AG04450 (cell line): ENCODE measurements at regions of chr4 and their contacts with region 1.

Region 1: DNA sequence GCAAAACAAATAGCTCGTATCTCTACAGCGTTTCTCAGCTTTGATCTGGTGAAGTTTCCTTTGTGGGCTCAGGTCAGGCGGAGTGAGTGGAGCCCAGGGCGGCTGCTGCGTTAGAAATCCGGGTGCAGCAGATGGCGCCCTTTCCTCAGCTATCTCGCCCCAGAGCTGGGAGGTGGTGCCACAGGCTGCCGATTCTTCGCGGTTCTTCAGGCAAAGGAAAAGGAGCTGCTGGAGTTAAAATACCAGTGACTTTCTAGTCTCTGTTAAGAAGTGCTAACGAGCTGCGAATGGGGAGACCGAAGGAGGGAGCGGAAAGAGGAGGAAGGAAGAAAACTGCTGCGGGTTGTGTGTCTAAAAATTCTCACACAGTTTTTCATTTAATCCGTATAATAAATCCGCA is 114.6 kb downstream of the CPE start:
- DNase-seq: no peak
- H3K4me3 ChIP-seq: no peak overlapping the region
- H3K27ac ChIP-seq: no peak overlapping the region
- H3K27me3 ChIP-seq: no peaks in the 10 kb centered on the region
- CTCF ChIP-seq: peak; percentile 75

Region 2: DNA sequence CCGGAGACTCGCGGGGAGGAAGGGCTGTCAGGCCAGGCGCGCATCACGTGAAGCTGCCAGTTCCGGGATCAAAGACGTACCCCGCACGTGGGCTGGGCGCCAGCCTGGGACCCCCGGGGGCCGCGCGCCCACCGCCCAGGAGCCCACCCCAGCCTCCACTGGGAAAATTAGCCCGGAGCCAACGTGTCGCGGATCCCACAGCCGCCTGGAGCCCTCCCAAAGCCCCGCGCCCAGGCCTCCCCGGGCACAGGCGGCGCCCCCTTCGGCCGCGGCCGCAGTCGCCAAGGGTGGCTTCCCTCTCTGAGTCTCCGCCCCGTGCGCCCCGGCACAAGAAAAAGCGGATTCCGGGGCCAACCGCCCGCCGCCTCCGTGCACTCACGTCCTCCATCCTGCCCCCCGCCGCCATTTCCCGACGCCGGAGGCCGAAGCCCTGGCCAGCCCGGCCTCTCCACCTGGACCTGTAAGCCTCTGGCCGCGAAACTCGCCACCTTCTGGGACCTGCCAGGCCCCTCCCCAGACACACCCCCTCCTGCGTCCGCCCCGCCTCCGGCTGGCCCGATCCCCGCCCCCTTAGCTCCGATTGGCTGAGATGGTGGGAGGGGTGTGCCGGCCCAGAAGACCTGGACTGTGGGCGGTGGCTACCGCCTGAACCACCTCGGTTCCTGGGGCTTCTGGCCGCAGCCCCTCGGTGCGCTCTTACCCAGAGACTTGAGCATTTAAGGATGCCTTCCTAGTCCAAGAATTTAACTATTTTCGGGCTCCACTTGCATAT is 380.8 kb before region 1 on chr4 and contains the start of gene TMEM192:
- CTCF ChIA-PET with region 1: interaction called, 10 read pairs
- POLR2A ChIA-PET with region 1: no interaction called
- DNase-seq: peak; percentile 53
- H3K4me3 ChIP-seq: peak within 1 kb of the TSS; percentile 85
- H3K27ac ChIP-seq: peak within 1 kb of the TSS; percentile 63
- H3K27me3 ChIP-seq: no peaks in the 10 kb centered on the region
- CTCF ChIP-seq: peak; percentile 45
- polyA plus RNA-seq, gene TMEM192: 15.3 and 15.8 TPM in 2 replicates

Region 3: DNA sequence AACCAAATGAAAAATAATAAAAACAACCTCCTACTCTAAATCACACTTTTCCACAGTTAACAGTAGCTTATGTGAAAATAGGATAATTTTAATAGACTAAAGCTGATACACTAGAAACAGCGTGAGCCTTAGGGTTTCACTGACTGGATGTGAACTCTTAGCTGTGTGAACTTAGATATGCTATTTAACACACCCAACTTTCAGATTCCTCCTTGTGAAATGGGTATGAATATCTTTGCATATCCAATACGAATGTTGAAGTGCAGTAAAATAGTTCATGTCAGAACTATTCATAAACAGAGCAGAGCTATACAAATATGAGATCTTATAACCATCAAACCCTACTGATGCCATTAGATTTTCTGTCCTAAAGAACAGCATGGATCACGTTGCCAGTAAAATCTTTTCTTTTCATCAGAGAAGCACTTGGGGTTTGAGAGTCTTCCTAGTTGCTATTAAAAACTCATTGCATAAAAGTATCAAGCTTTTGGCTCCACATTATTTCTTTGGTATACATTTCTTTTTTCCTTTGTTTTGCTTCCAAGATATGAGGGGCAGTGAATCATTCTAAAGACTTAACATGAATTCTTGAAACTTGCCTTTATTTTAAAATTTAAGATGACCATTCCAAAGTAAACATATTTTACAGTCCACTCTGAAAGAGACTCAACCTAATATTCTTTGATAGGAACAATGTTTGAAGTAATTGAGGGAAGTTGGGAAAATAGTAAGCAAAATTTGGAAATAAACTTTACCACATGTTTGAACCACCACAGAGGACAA is 12.1 kb before region 1 on chr4:
- CTCF ChIA-PET with region 1: interaction called, 34 read pairs
- POLR2A ChIA-PET with region 1: no interaction called
- DNase-seq: no peak
- H3K4me3 ChIP-seq: no peak overlapping the region
- H3K27ac ChIP-seq: no peak overlapping the region
- H3K27me3 ChIP-seq: no peaks in the 10 kb centered on the region
- CTCF ChIP-seq: no peak

Region 4: DNA sequence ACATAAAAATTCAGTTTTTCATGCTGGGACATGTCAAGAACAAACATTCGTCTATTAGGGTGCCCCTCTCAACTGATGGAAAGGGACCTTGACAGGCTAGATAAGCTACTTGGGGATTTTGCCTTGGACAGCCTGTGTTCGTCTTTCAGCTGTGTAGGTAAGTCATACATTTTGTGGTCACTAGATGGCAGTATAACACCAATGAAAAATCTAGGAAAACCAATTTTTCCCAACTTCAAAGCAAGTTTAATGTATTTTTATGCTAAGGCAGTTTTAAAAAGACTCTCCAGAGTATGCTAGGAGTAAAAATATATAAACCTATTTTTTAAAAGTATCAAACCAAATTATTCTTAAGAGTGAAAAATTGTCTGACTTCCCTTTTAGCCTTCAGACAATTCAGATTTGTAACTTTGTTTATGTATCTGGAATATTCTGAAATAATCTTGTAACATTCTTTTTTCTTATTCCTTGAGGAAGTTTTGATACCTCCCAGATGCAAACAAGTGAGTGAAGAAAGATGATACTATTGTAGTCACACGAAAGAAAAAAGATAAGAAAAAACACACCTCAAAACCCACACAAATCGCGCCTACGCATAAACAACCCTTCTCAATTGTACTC is 43.8 kb after region 1 on chr4:
- CTCF ChIA-PET with region 1: interaction called, 21 read pairs
- POLR2A ChIA-PET with region 1: no interaction called
- DNase-seq: no peak
- H3K4me3 ChIP-seq: no peak overlapping the region
- H3K27ac ChIP-seq: no peak overlapping the region
- H3K27me3 ChIP-seq: no peaks in the 10 kb centered on the region
- CTCF ChIP-seq: peak; percentile 67

Region 5: DNA sequence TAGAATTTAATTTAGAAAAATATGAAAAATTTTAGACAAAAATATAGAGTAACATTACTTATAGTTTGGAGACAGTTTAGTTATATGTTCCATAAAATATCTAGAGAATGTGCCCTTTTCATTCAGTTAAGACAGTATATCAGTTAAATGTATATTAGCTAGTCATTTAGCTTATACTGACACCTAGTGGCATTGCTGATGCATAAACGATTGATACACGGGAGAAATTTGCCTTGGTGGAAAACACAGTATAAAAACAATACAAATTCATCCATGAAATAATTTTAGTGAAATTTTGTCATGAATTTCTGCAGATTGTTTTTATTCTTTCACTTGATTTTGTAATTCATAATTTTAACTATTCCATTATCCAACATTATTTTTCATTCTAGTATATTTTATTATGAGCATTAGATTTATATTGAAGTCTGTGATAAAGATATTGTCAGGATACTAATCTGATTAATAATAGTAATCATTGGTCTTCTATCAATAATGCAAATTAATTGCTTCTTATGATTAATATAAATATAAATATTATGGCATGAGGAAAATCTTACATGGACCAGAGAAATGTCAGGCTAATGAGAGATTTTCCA is 598.7 kb after region 1 on chr4:
- CTCF ChIA-PET with region 1: interaction called, 61 read pairs
- POLR2A ChIA-PET with region 1: no interaction called
- DNase-seq: no peak
- H3K4me3 ChIP-seq: no peak overlapping the region
- H3K27ac ChIP-seq: no peak overlapping the region
- H3K27me3 ChIP-seq: no peaks in the 10 kb centered on the region
- CTCF ChIP-seq: peak; percentile 75